ENCODE measurements at regions of chr17 and their contacts with region 1.

Region 1: DNA sequence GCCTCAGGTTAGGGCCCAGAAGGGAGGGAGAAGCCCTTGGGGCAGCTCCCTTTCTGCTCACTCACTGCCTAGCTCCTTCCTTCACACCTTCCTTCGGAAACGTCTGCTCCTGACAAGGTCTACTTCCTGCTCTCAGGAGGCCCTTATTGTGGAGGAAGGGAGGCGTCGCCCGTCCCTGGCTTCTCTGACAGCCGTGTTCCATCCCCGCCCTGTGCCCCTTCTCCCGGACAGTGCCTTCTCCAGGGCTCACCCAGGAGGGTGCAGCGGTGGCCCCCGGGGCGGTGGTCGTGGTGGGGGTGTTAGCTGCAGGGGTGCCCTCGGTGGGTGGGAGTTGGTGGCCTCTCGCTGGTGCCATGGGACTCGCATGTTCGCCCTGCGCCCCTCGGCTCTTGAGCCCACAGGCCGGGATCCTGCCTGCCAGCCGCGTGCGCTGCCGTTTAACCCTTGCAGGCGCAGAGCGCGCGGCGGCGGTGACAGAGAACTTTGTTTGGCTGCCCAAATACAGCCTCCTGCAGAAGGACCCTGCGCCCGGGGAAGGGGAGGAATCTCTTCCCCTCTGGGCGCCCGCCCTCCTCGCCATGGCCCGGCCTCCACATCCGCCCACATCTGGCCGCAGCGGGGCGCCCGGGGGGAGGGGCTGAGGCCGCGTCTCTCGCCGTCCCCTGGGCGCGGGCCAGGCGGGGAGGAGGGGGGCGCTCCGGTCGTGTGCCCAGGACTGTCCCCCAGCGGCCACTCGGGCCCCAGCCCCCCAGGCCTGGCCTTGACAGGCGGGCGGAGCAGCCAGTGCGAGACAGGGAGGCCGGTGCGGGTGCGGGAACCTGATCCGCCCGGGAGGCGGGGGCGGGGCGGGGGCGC is 231.9 kb downstream of the SEC14L1 start:
- DNase-seq: peak; percentile 83 to 94 (median 90)
- H3K4me3 ChIP-seq: peak overlapping the region in 2 of 4 donors; percentile 51 to 78
- H3K27ac ChIP-seq: peak overlapping the region; percentile 90 to 99 (median 96)
- H3K4me1 ChIP-seq: peaks cover 41 to 64% of the 10 kb centered on the region in 2 donors
- H3K27me3 ChIP-seq: no peaks in the 10 kb centered on the region
- CTCF ChIP-seq: no peak
- POLR2A ChIP-seq: peak in 1 of 2 donors; percentile 30

Region 2: GRCh38 chr17:77297693-77298666 is 74.7 kb before region 1 on chr17:
- intact Hi-C with region 1: no loop called
- DNase-seq: no peak
- H3K4me3 ChIP-seq: no peak overlapping the region
- H3K27ac ChIP-seq: no peak overlapping the region
- H3K4me1 ChIP-seq: no peaks in the 10 kb centered on the region
- H3K27me3 ChIP-seq: no peaks in the 10 kb centered on the region
- CTCF ChIP-seq: no peak
- POLR2A ChIP-seq: no peak

Region 3: DNA sequence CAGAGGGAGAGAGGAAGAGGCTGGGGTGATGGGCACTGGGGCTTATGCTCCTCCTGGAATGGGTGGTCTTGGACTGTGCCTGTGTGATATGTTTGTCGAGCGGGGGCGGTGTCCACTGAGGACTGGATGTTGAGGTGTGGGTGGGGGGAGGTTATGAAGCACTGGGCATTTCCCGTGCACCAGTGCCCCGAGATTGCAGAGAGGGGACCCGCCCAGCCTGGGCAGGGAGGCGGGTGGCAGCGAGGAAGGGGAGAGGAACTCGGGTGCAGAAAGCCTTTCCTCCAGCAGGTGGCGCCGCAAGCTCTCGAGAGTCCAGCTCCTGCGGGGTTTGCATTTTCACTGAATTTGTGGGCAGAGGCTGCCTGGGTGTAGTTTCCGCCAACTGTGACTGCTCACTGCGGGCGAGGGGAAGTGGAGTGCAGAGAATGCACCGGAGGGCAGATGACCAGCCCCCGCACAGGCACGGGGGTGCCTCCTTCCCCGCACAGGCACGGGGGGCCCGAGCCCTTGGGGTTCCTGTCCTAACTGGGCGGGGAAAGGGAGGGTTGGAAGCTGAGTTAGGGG is 41.3 kb before region 1 on chr17:
- intact Hi-C with region 1: loop called in 1 of 2 experiments (anchors 5 kb)
- DNase-seq: peak; percentile 89 to 97 (median 96)
- H3K4me3 ChIP-seq: no peak overlapping the region
- H3K27ac ChIP-seq: peak overlapping the region in 3 of 5 donors; percentile 48 to 64 (median 64)
- H3K4me1 ChIP-seq: peaks cover 4 to 10% of the 10 kb centered on the region in 2 donors
- H3K27me3 ChIP-seq: no peaks in the 10 kb centered on the region
- CTCF ChIP-seq: peak; percentile 91 to 97 (median 96)
- POLR2A ChIP-seq: no peak